Activated CD4-positive, alpha-beta memory T cell treated with anti-CD3 and anti-CD28 coated beads for 36 hours (primary cell): ENCODE measurements at regions of chr10 and their contacts with region 1.

Region 1: DNA sequence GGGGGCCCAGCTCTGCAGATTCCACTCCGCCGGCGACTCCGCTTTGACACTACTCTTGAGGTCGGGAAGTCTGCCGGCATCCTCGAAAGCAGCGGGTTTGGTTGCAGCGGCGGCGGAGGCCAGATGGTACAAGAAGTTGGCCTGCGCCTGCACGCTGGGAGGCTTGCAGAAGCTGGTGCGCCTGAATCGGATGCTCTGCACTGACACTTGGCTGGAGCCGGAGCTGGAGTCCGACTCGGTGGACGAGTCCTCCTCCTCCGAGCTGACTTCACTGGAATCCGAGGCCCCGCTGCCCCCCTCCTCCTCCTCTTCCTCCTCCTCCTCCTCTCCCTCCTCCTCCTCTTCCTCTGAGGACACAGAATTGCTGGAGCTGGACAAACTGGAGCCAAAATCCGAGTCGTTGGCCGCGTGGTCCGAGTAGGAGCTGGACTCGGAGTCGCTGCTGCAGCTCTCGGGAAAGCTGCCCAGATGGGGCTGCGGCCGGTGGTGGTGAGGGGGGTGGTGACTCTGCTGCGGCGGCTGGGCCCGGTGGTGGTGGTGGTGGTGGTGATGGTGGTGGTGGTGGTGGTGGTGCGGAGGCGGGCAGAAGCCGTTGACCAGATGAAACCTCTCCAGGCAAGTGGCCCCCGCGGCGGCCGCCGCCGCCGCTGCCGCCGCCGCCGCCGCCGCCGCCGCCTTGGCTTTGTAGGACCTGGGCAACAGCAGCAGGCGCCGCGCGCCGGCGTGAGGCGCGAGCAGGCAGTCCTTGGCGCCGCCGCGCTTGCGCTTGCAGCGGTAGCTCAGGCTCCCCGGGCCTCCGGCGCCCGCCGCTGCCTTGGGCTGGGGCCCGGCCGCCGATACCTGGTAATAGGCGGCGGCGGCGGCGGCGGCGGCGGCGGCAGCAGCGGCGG is 9.0 kb downstream of the SKIDA1 start:
- DNase-seq: peak; percentile 60
- H3K4me3 Mint-ChIP-seq: peak overlapping the region; percentile 84
- H3K27ac Mint-ChIP-seq: no peak overlapping the region
- H3K4me1 Mint-ChIP-seq: peaks cover 34% of the 10 kb centered on the region
- H3K27me3 Mint-ChIP-seq: peaks cover 73% of the 10 kb centered on the region

Region 2: DNA sequence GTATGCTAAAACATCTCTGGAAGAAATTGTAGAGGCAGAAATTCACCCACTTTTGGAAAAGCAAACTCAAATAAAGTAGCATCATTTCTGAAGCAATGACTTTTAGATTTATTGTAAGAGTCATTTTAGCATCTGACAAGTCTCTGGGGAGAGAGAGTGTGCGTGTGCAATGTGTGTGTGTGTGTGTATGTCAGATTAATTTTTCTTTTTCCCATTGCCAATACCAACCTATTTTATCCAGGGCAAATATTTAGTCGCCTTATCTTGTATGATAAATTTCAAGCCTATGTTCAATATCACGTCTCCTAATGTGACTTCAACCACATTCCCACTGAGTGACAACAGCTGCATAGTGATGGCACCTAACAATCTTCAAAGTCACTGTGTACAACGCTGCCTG is 721.1 kb before region 1 on chr10:
- CTCF ChIA-PET with region 1: no interaction called
- POLR2A ChIA-PET with region 1: no interaction called
- intact Hi-C with region 1: no loop called
- DNase-seq: no peak
- H3K4me3 Mint-ChIP-seq: no peak overlapping the region
- H3K27ac Mint-ChIP-seq: no peak overlapping the region
- H3K4me1 Mint-ChIP-seq: no peaks in the 10 kb centered on the region
- H3K27me3 Mint-ChIP-seq: no peaks in the 10 kb centered on the region

Region 3: DNA sequence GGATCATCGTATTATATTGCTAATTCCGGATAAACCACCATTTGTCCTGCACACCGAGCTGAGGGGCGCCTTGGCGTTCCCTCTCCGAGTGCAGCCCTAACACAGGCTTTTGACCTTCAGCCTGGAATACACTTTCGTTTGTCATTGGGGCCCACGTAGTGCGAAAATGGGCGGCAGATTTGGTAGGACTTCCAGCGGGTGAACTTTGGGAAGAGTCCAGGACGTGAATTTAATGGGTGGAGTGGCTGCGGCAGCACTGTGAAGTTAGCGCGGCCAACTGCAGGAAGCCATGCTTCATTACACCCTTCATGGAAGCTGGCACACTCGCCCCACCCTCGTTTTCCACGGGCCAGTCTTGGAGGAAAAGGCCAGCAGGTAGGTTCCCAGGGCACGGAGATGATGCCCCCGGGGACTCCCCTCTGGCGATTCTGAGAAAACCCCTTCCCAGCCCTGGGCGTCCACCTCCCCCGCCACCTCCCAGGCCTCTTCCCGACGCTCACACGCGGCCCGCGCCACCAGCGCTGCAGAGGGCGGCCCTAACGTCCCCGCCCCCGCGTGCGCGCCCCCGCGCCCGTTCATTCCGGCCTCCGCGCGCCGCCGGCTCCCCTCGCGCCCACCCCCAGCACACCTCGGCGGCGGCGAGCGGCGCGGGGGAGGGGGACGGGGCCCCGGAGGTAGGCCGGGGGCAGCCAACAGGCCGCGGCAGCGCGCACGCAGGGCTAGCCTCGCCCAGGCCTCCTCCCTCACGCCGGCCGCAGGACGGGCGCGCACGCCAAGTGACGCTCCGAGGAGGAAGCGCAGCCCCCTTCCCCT is 17.2 kb after region 1 on chr10 and contains the start of gene MLLT10:
- CTCF ChIA-PET with region 1: interaction called, 4 read pairs
- POLR2A ChIA-PET with region 1: interaction called, 8 read pairs
- intact Hi-C with region 1: loop called (anchors 2 kb)
- DNase-seq: peak; percentile 94
- H3K4me3 Mint-ChIP-seq: peak within 1 kb of the TSS; percentile 87
- H3K27ac Mint-ChIP-seq: peak within 1 kb of the TSS; percentile 96
- H3K4me1 Mint-ChIP-seq: peaks cover 27% of the 10 kb centered on the region
- H3K27me3 Mint-ChIP-seq: no peaks in the 10 kb centered on the region
- total RNA-seq, gene MLLT10: 32.8 to 35.4 TPM

Region 4: GRCh38 chr10:21732067-21732772 is 215.7 kb after region 1 on chr10:
- CTCF ChIA-PET with region 1: no interaction called
- POLR2A ChIA-PET with region 1: no interaction called
- intact Hi-C with region 1: loop called (anchors 5 kb)
- DNase-seq: peak; percentile 59
- H3K4me3 Mint-ChIP-seq: no peak overlapping the region
- H3K27ac Mint-ChIP-seq: no peak overlapping the region
- H3K4me1 Mint-ChIP-seq: peaks cover 25% of the 10 kb centered on the region
- H3K27me3 Mint-ChIP-seq: no peaks in the 10 kb centered on the region

Region 5: DNA sequence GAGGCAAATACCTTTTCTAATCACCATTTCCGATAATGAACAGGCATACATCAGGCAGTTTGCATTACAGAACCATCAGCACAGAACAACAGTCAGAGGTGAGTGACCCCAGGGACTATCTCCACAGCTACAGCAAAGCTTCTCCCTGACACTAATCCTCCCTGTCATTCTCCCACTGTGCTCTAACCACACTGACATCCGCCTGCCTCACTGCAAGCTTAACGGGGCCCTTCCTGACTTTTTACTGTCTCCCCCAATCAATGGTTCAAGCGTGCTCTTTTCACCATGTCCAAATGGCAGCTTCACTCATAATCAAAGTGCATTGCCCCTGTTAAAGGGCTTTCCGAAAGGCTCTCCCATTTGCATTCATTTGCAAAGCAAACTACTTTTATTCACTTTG is 290.7 kb after region 1 on chr10:
- CTCF ChIA-PET with region 1: no interaction called
- POLR2A ChIA-PET with region 1: no interaction called
- intact Hi-C with region 1: no loop called
- DNase-seq: no peak
- H3K4me3 Mint-ChIP-seq: no peak overlapping the region
- H3K27ac Mint-ChIP-seq: no peak overlapping the region
- H3K4me1 Mint-ChIP-seq: no peaks in the 10 kb centered on the region
- H3K27me3 Mint-ChIP-seq: no peaks in the 10 kb centered on the region